Activated naive CD4-positive, alpha-beta T cell treated with anti-CD3 and anti-CD28 coated beads for 36 hours (primary cell): ENCODE measurements at regions of chr13 and their contacts with region 1.

Region 1: GRCh38 chr13:60431108-60431700 is 34.2 kb downstream of the TDRD3 start:
- DNase-seq: no peak
- H3K4me3 Mint-ChIP-seq: no peak overlapping the region
- H3K27ac Mint-ChIP-seq: no peak overlapping the region
- H3K4me1 Mint-ChIP-seq: peaks cover 20% of the 10 kb centered on the region
- H3K27me3 Mint-ChIP-seq: no peaks in the 10 kb centered on the region

Region 2: DNA sequence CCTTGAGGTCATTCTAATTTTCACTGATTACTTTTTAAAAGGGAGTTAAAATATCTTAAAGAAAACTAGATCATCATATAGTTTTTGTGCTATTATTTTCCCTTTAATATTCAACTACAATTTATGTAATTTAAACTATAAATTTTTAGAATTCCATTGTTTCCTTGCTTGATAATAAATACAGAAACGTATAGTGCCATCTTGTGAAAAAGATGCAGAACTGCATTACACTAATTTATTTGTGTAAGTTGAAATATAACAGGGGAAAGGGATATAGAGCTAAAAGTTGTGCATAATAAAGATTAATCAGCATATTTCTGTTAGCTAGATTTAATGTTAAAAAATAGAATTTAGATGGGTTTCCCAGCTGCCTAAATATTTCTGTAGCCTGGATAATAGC is 95.7 kb before region 1 on chr13:
- CTCF ChIA-PET with region 1: interaction called, 4 read pairs
- intact Hi-C with region 1: loop called (anchors 1 kb)
- DNase-seq: no peak
- H3K4me3 Mint-ChIP-seq: no peak overlapping the region
- H3K27ac Mint-ChIP-seq: no peak overlapping the region
- H3K4me1 Mint-ChIP-seq: no peaks in the 10 kb centered on the region
- H3K27me3 Mint-ChIP-seq: no peaks in the 10 kb centered on the region

Region 3: DNA sequence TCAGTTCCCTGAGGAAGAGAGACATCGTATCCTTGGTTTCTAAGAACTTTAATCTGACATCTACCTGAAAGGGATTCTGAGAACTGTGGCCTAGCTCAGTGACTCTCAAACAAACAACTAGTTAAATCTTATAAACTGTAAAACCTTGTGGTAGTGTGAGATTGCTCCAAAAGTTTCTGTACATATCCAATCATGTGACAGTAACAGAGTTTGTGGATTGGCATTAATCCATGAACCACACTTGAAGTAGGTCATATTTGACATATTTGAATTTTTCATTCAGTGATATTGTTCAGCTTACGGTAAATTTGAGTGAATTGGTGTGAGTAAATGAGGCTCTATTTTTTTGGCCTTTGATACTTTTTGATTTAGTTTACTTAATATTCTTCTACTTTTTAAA is 19.2 kb before region 1 on chr13:
- CTCF ChIA-PET with region 1: interaction called, 11 read pairs
- intact Hi-C with region 1: no loop called
- DNase-seq: no peak
- H3K4me3 Mint-ChIP-seq: no peak overlapping the region
- H3K27ac Mint-ChIP-seq: no peak overlapping the region
- H3K4me1 Mint-ChIP-seq: peaks cover 49% of the 10 kb centered on the region
- H3K27me3 Mint-ChIP-seq: no peaks in the 10 kb centered on the region

Region 4: GRCh38 chr13:60482012-60482411 is 50.8 kb after region 1 on chr13:
- CTCF ChIA-PET with region 1: no interaction called
- intact Hi-C with region 1: no loop called
- DNase-seq: peak; percentile 29
- H3K4me3 Mint-ChIP-seq: no peak overlapping the region
- H3K27ac Mint-ChIP-seq: peak overlapping the region; percentile 60
- H3K4me1 Mint-ChIP-seq: peaks cover 6% of the 10 kb centered on the region
- H3K27me3 Mint-ChIP-seq: no peaks in the 10 kb centered on the region